B cell (primary cell): ENCODE measurements at regions of chr3 and their contacts with region 1.

Region 1: DNA sequence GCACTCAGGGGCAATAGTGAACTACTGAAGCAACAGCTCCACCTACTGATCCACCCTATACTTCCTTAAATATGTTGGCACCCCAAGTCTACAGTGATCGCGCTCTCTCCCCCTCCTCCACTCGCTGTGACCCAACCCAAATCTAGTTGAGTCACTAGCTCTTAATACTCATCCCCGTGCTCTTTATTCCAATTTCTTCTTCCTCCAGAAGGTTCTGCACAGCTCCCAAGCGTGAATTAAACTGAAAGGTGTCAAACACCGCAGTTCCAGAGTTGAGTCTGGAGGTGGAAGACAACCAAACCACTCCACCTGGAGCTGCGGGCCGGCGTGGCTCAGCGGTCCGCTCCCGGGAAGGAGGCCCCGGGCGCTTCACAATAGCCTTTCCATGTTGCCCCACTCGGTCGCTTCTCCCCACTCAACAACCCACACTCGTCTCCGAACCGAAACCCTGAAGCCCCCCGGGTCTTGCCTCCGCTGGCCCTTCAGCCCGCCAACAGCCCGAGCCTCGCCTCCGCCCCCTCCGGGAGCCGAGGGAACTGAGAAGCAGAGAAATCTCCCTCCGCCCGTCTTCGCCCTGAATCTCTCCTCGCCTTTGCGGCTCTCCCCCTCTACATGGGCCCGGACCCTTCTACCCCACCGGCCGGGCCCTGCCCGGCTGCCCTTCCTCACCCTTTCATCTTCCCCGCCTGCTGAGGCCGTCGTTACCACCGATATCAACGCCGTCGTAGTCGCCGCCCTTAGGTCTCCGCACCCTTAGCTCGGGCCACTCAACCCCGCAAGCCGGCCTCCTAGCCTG is 578 bp downstream of the NAA50 start:
- DNase-seq: peak; percentile 91
- ATAC-seq: peak; percentile 58
- H3K4me3 ChIP-seq: peak overlapping the region; percentile 75 to 94 (median 85)
- H3K4me3 Mint-ChIP-seq: peak overlapping the region; percentile 97
- H3K27ac ChIP-seq: peak overlapping the region; percentile 96 to 99
- H3K27ac Mint-ChIP-seq: peak overlapping the region; percentile 100
- H3K4me1 ChIP-seq: peaks cover 32 to 46% of the 10 kb centered on the region in 2 donors
- H3K4me1 Mint-ChIP-seq: peaks cover 67% of the 10 kb centered on the region
- H3K27me3 ChIP-seq: no peaks in the 10 kb centered on the region
- H3K27me3 Mint-ChIP-seq: no peaks in the 10 kb centered on the region
- CTCF ChIP-seq: peak; percentile 76

Region 2: GRCh38 chr3:112561731-112562688 is 1183.5 kb before region 1 on chr3 and contains the starts of genes ATG3 and SLC35A5:
- CTCF ChIA-PET with region 1: no interaction called
- POLR2A ChIA-PET with region 1: interaction called, 3 read pairs
- intact Hi-C with region 1: loop called (anchors 5 kb)
- DNase-seq: peak; percentile 99
- ATAC-seq: peak; percentile 79
- H3K4me3 ChIP-seq: peak within 1 kb of the TSS; percentile 75 to 99 (median 94)
- H3K4me3 Mint-ChIP-seq: peak within 1 kb of the TSS; percentile 99
- H3K27ac ChIP-seq: peak within 1 kb of the TSS; percentile 93 to 96
- H3K27ac Mint-ChIP-seq: peak within 1 kb of the TSS; percentile 100
- H3K4me1 ChIP-seq: peaks cover 23 to 34% of the 10 kb centered on the region in 2 donors
- H3K4me1 Mint-ChIP-seq: peaks cover 50% of the 10 kb centered on the region
- H3K27me3 ChIP-seq: no peaks in the 10 kb centered on the region
- H3K27me3 Mint-ChIP-seq: no peaks in the 10 kb centered on the region
- CTCF ChIP-seq: no peak
- total RNA-seq, gene ATG3: 48.8 and 54.9 TPM in 2 replicates
- total RNA-seq, gene SLC35A5: 32.1 and 34.9 TPM in 2 replicates

Region 3: GRCh38 chr3:113495035-113495434 is 250.4 kb before region 1 on chr3:
- CTCF ChIA-PET with region 1: interaction called, 35 read pairs
- POLR2A ChIA-PET with region 1: no interaction called
- intact Hi-C with region 1: loop called (anchors 1 kb)
- DNase-seq: peak; percentile 60
- ATAC-seq: peak; percentile 47
- H3K4me3 ChIP-seq: no peak overlapping the region
- H3K4me3 Mint-ChIP-seq: no peak overlapping the region
- H3K27ac ChIP-seq: no peak overlapping the region
- H3K27ac Mint-ChIP-seq: no peak overlapping the region
- H3K4me1 ChIP-seq: no peaks in the 10 kb centered on the region
- H3K4me1 Mint-ChIP-seq: no peaks in the 10 kb centered on the region
- H3K27me3 ChIP-seq: no peaks in the 10 kb centered on the region
- H3K27me3 Mint-ChIP-seq: no peaks in the 10 kb centered on the region
- CTCF ChIP-seq: peak; percentile 57

Region 4: DNA sequence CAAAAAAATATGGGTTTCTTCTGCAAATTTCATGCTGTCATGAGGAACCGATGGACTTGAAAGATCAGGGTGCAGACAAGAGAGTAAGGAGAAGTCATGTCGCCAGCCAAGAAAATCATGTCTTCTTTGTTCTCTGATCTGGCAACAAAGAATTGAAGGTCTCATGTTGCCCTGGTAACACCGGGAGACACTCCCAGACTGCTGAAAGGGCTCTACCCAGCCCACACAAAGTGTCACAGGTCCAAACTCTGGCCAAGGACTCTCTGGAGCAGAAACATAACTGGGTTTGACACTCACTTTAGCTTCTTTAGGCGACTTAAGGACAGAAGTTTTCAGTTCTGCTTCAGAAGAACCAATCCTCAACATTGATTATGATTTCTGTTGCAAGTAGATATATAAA is 170.3 kb before region 1 on chr3:
- CTCF ChIA-PET with region 1: interaction called, 17 read pairs
- POLR2A ChIA-PET with region 1: no interaction called
- intact Hi-C with region 1: no loop called
- DNase-seq: no peak
- ATAC-seq: no peak
- H3K4me3 ChIP-seq: no peak overlapping the region
- H3K4me3 Mint-ChIP-seq: no peak overlapping the region
- H3K27ac ChIP-seq: peak overlapping the region in 1 of 2 donors; percentile 46
- H3K27ac Mint-ChIP-seq: no peak overlapping the region
- H3K4me1 ChIP-seq: peaks cover 2 to 3% of the 10 kb centered on the region in 2 donors
- H3K4me1 Mint-ChIP-seq: peaks cover 4% of the 10 kb centered on the region
- H3K27me3 ChIP-seq: no peaks in the 10 kb centered on the region
- H3K27me3 Mint-ChIP-seq: no peaks in the 10 kb centered on the region
- CTCF ChIP-seq: no peak

Region 5: GRCh38 chr3:113783463-113783862 is 38.0 kb after region 1 on chr3:
- CTCF ChIA-PET with region 1: interaction called, 3 read pairs
- POLR2A ChIA-PET with region 1: interaction called, 9 read pairs
- intact Hi-C with region 1: loop called (anchors 5 kb)
- DNase-seq: peak; percentile 45
- ATAC-seq: peak; percentile 33
- H3K4me3 ChIP-seq: no peak overlapping the region
- H3K4me3 Mint-ChIP-seq: no peak overlapping the region
- H3K27ac ChIP-seq: peak overlapping the region in 1 of 2 donors; percentile 25
- H3K27ac Mint-ChIP-seq: peak overlapping the region; percentile 56
- H3K4me1 ChIP-seq: peaks cover 4 to 9% of the 10 kb centered on the region in 2 donors
- H3K4me1 Mint-ChIP-seq: peaks cover 11% of the 10 kb centered on the region
- H3K27me3 ChIP-seq: no peaks in the 10 kb centered on the region
- H3K27me3 Mint-ChIP-seq: no peaks in the 10 kb centered on the region
- CTCF ChIP-seq: no peak

Region 6: GRCh38 chr3:113844622-113845222 is 99.3 kb after region 1 on chr3:
- CTCF ChIA-PET with region 1: interaction called, 42 read pairs
- POLR2A ChIA-PET with region 1: interaction called, 6 read pairs
- intact Hi-C with region 1: loop called (anchors 2 kb)
- DNase-seq: peak; percentile 53
- ATAC-seq: peak; percentile 36
- H3K4me3 ChIP-seq: no peak overlapping the region
- H3K4me3 Mint-ChIP-seq: no peak overlapping the region
- H3K27ac ChIP-seq: no peak overlapping the region
- H3K27ac Mint-ChIP-seq: no peak overlapping the region
- H3K4me1 ChIP-seq: peaks cover 0 to under 1% of the 10 kb centered on the region in 2 donors
- H3K4me1 Mint-ChIP-seq: peaks cover 12% of the 10 kb centered on the region
- H3K27me3 ChIP-seq: no peaks in the 10 kb centered on the region
- H3K27me3 Mint-ChIP-seq: no peaks in the 10 kb centered on the region
- CTCF ChIP-seq: peak; percentile 75

Region 7: GRCh38 chr3:114213627-114214541 is 468.4 kb after region 1 on chr3:
- CTCF ChIA-PET with region 1: interaction called, 12 read pairs
- POLR2A ChIA-PET with region 1: interaction called, 11 read pairs
- intact Hi-C with region 1: loop called (anchors 1 kb)
- DNase-seq: peak; percentile 92
- ATAC-seq: peak; percentile 76
- H3K4me3 ChIP-seq: peak overlapping the region; percentile 42 to 76 (median 69)
- H3K4me3 Mint-ChIP-seq: no peak overlapping the region
- H3K27ac ChIP-seq: peak overlapping the region; percentile 95 to 98
- H3K27ac Mint-ChIP-seq: no peak overlapping the region
- H3K4me1 ChIP-seq: peaks cover 66 to 71% of the 10 kb centered on the region in 2 donors
- H3K4me1 Mint-ChIP-seq: peaks cover 28% of the 10 kb centered on the region
- H3K27me3 ChIP-seq: no peaks in the 10 kb centered on the region
- H3K27me3 Mint-ChIP-seq: no peaks in the 10 kb centered on the region
- CTCF ChIP-seq: no peak